ENCODE measurements at regions of chr1 and their contacts with region 1.

Region 1: GRCh38 chr1:161216945-161217712 is 2.0 kb downstream of the FCER1G start:
- DNase-seq: peak; percentile 59
- ATAC-seq: peak; percentile 17
- H3K4me3 ChIP-seq: peak overlapping the region in 2 of 3 experiments; percentile 31 to 63; a peak in 3 of 6 replicates
- H3K27ac ChIP-seq: peak overlapping the region; percentile 99
- H3K4me1 ChIP-seq: peaks cover 65% of the 10 kb centered on the region
- H3K27me3 ChIP-seq: no peaks in the 10 kb centered on the region; a peak in 1 of 5 replicates
- CTCF ChIP-seq: no peak
- EP300 ChIP-seq: 0 out of 4 replicates have a peak, but pooled peaks of 1 of the 2 experiments have one; percentile 16
- POLR2A ChIP-seq: peak in 1 of 2 experiments; percentile 14; a peak in 2 of 4 replicates
- RAD21 ChIP-seq: no peak

Region 2: DNA sequence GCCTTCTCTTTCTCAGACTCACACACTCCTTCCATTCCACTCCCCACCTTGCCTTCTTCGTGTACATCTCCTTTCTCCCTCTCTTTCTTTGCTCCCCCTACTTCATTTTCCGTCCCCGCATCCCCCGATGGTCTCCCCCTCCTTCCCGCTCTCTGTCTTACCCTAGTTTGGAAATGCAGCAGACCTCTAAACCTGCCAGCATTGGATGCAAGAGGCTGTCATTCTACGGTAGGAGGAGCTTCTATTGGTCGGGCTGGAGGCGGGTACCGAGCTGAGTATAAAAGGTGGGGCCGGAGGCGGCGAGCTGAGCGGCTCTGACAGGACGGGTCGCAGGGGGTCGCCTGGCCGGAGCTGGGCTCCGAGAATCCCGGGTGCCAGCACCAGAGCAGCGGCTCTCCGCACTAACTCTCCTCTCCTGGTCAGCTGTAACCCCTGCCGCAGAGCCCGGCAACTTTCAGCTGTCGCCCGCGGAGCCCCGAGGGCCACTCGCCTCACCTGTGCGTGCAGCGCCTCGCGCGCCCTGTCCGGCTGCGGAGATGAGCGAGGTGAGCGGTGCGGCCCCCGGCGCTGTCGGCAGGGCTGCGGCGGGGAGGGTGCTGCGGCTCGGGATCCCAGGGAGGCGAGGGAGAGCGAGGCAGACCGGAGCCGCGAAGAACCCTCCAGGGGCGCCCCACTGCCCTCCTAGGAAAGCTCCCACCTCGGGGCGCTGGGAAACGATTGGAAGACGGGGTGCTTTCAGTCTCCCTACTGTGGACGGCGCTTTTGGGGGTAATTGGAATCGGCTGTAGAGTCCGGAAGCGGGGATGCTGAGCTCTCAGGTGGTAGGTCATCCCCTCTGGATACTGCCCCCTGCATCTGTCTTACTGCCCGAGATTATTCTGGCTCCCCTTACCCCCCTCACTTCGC is 41.6 kb after region 1 on chr1 and contains the start of gene PCP4L1:
- CTCF ChIA-PET with region 1: no interaction called
- POLR2A ChIA-PET with region 1: no interaction called
- in situ Hi-C with region 1: no loop called
- intact Hi-C with region 1: no loop called
- DNase-seq: no peak
- ATAC-seq: peak; percentile 78
- H3K4me3 ChIP-seq: peak within 1 kb of the TSS in 2 of 3 experiments; percentile 23 to 44; a peak in 2 of 6 replicates
- H3K27ac ChIP-seq: no peak within 1 kb of the TSS
- H3K4me1 ChIP-seq: peaks cover 51% of the 10 kb centered on the region
- H3K27me3 ChIP-seq: peaks cover 0 to 16% of the 10 kb centered on the region in 2 experiments; a peak in 3 of 5 replicates
- CTCF ChIP-seq: no peak
- EP300 ChIP-seq: no peak
- POLR2A ChIP-seq: no peak
- RAD21 ChIP-seq: no peak
- total RNA-seq, gene PCP4L1: not detected in 2 replicates

Region 3: GRCh38 chr1:161389691-161390558 is 172.8 kb after region 1 on chr1:
- CTCF ChIA-PET with region 1: no interaction called
- POLR2A ChIA-PET with region 1: interaction called, 11 read pairs
- in situ Hi-C with region 1: loop called (anchors 10 kb)
- intact Hi-C with region 1: no loop called
- DNase-seq: peak; percentile 91
- ATAC-seq: peak; percentile 92
- H3K4me3 ChIP-seq: peak overlapping the region; percentile 66 to 97 (median 80)
- H3K27ac ChIP-seq: peak overlapping the region; percentile 74
- H3K4me1 ChIP-seq: peaks cover 50% of the 10 kb centered on the region
- H3K27me3 ChIP-seq: no peaks in the 10 kb centered on the region; a peak in 1 of 5 replicates
- CTCF ChIP-seq: 0 out of 2 replicates have a peak, but pooled peaks have one; percentile 5
- EP300 ChIP-seq: no peak; a peak in 1 of 4 replicates
- POLR2A ChIP-seq: peak; percentile 93 to 95
- RAD21 ChIP-seq: peak; percentile 14; the same call in 1 of the 2 replicates